Right cardiac atrium (tissue), 5 donors: ENCODE measurements at regions of chr6 and their contacts with region 1.

Region 1: DNA sequence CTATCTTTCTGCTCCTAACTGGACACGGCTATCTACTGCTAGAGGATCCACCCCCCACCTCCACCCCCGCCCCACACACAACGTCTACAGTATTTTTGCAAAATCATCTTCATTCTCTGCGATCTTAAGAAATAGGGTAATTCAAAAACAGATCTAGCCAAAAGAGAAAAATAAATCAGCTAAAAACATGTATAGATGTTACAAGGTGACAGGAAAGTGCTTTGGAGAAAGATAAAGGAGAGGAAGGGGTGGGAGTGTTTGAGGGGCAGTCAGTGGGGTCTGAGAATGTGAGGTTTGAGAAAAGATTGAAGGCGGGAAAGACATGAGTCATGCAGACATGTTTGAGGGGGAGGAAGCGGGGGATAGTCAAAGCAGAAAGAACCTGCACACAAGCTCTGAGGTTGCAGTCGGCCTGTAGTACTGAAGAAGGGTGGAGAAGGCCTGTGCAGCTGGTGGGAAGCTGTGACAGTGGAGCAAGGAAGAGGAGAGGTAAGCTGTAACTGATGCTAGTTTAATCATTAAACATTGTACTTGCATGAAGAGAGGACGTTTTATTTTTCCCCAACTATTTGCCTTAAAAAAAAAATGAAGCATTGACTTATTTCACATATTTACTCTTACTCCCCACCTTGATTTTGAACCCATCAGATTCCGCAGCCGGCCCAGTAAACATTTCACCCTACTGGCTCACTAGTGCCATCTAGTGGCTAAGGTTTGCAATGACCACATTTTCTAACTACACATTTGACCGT is 332.6 kb downstream of the ADGRB3 start:
- DNase-seq: peak in 2 of 3 donors; percentile 23 to 55
- ATAC-seq: peak; percentile 55 to 60
- H3K4me3 ChIP-seq: no peak overlapping the region
- H3K27ac ChIP-seq: no peak overlapping the region
- H3K4me1 ChIP-seq: no peaks in the 10 kb centered on the region
- H3K27me3 ChIP-seq: no peaks in the 10 kb centered on the region

Region 2: DNA sequence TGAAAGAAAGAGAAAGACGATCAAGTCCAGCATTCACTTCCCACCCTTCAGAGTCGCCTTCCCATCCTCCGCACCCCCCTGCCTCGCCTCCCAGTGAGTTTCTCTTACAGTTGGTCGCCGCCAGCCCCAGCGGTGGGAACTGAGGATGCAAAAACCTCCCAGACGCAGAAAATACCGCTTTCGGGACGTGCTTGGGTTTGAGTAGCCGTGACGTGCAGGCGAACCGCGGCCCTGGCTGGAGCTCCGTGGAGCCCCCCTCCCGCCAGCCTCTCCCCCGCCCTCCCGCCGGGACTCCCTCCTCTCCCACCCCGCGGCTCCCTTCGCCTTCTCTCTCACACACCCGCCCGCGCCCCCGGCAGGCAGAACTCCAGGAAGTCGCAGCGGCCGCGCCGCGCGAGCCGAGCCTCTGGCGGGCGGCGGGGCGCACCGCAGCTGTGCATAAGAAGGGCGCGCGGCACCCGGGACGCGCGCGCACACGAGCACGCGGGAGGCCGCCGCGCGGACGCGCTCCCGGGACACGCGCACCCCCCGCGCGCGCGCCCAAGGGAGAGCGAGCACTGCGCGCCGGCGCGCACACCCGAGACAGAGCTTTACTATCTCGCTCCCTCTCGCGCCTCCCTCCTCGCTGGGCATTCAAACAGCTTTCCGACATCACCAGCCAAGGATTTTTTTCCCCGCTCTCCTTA is 332.9 kb before region 1 on chr6 and contains the start of gene ADGRB3:
- intact Hi-C with region 1: loop called in 2 of 4 experiments (anchors 10 kb)
- DNase-seq: peak; percentile 81 to 94 (median 93)
- ATAC-seq: peak; percentile 97
- H3K4me3 ChIP-seq: peak within 1 kb of the TSS; percentile 92
- H3K27ac ChIP-seq: peak within 1 kb of the TSS; percentile 75
- H3K4me1 ChIP-seq: no peaks in the 10 kb centered on the region
- H3K27me3 ChIP-seq: no peaks in the 10 kb centered on the region
- total RNA-seq, gene ADGRB3: 1.5 to 2.6 (median 1.5) TPM

Region 3: DNA sequence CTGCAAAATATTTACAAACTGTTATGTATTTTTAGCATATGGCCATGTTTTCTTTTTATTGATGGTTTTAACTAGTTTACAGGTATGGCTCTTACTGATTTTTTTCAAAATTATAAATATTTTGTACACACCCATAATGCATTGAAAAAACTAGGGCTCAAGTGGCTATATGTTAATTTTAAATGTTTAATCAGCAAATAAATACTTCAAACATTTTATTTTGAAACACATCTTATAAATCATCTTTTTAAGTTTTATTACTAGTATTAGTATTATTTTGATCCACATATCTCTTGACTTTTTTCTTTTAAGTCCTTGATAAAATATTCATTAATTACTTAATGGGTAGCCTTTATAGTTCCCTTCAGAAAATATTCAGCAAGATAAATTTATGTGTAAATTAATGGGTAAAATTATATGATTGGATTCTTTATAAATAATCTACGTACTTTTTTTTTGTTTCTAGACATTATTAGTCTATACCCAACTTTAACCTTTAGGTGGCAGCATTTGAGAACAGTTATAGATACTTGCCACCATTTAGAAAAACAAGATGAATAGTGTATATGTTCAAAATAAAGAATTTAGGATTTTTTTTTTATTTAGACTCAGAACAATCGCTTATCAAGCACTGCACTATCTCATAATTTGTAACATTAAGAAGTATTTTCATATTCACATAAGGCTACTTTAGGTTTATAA is 90.8 kb before region 1 on chr6:
- intact Hi-C with region 1: loop called in 1 of 4 experiments (anchors 10 kb)
- DNase-seq: no peak
- ATAC-seq: no peak
- H3K4me3 ChIP-seq: no peak overlapping the region
- H3K27ac ChIP-seq: no peak overlapping the region
- H3K4me1 ChIP-seq: no peaks in the 10 kb centered on the region
- H3K27me3 ChIP-seq: no peaks in the 10 kb centered on the region